Breast epithelium (tissue), 4 donors: ENCODE measurements at regions of chr2 and their contacts with region 1.

Region 1: GRCh38 chr2:58299123-58299522 is 58.0 kb upstream of the FANCL start:
- DNase-seq: no peak
- H3K4me3 ChIP-seq: no peak overlapping the region
- H3K27ac ChIP-seq: no peak overlapping the region
- H3K4me1 ChIP-seq: no peaks in the 10 kb centered on the region
- H3K27me3 ChIP-seq: no peaks in the 10 kb centered on the region
- CTCF ChIP-seq: no peak
- POLR2A ChIP-seq: no peak

Region 2: GRCh38 chr2:59882822-59883221 is 1583.7 kb after region 1 on chr2:
- intact Hi-C with region 1: loop called (anchors 5 kb)
- DNase-seq: peak in 1 of 2 donors; percentile 77
- H3K4me3 ChIP-seq: no peak overlapping the region
- H3K27ac ChIP-seq: peak overlapping the region in 1 of 2 donors; percentile 50
- H3K4me1 ChIP-seq: no peaks in the 10 kb centered on the region
- H3K27me3 ChIP-seq: no peaks in the 10 kb centered on the region
- CTCF ChIP-seq: no peak
- POLR2A ChIP-seq: no peak